IMR-90 (cell line): ENCODE measurements at regions of chr4 and their contacts with region 1.

Region 1: GRCh38 chr4:139030614-139031235 is 15.1 kb downstream of the NOCT start:
- DNase-seq: peak; percentile 83
- ATAC-seq: peak; percentile 51
- H3K4me3 ChIP-seq: no peak overlapping the region
- H3K27ac ChIP-seq: no peak overlapping the region
- H3K4me1 ChIP-seq: peaks cover 9% of the 10 kb centered on the region
- H3K27me3 ChIP-seq: no peaks in the 10 kb centered on the region
- CTCF ChIP-seq: peak; percentile 89
- POLR2A ChIP-seq: 0 out of 2 replicates have a peak, but pooled peaks have one; percentile 33
- RAD21 ChIP-seq: peak; percentile 85

Region 2: DNA sequence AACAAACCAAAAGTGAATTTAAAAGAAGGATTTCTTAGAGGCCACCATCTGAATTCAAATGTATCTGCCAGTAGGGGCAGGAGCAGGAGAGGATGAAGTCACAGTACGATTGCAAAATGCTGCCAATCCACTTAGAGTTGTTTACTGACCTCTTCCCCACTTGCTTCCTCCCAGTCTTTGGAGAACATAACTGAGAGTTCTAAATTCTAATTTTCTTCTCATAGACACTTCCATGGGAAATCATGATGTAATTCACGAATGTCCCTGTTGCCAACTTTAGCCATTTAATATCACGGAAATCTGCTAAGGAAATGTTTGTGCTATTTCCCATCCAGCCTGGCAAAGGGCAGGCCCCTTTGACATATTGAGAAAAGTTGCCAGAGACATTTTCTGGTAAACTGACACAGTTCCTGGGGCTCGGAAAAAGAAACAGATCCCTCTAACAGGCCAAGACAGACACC is 48.8 kb before region 1 on chr4:
- CTCF ChIA-PET with region 1: no interaction called
- POLR2A ChIA-PET with region 1: no interaction called
- dilution Hi-C with region 1: no loop called
- in situ Hi-C with region 1: no loop called
- intact Hi-C with region 1: no loop called
- DNase-seq: peak; percentile 74
- ATAC-seq: peak; percentile 88
- H3K4me3 ChIP-seq: no peak overlapping the region
- H3K27ac ChIP-seq: peak overlapping the region; percentile 16; the same call in 1 of the 2 replicates
- H3K4me1 ChIP-seq: peaks cover 3% of the 10 kb centered on the region
- H3K27me3 ChIP-seq: no peaks in the 10 kb centered on the region
- CTCF ChIP-seq: peak; percentile 31; the same call in 1 of the 2 replicates
- POLR2A ChIP-seq: no peak
- RAD21 ChIP-seq: no peak

Region 3: GRCh38 chr4:139018971-139019758 is 11.6 kb before region 1 on chr4:
- CTCF ChIA-PET with region 1: interaction called, 17 read pairs
- POLR2A ChIA-PET with region 1: interaction called, 3 read pairs
- dilution Hi-C with region 1: no loop called
- in situ Hi-C with region 1: no loop called
- intact Hi-C with region 1: no loop called
- DNase-seq: peak; percentile 85
- ATAC-seq: no peak
- H3K4me3 ChIP-seq: no peak overlapping the region
- H3K27ac ChIP-seq: no peak overlapping the region
- H3K4me1 ChIP-seq: peaks cover 21% of the 10 kb centered on the region
- H3K27me3 ChIP-seq: no peaks in the 10 kb centered on the region
- CTCF ChIP-seq: no peak
- POLR2A ChIP-seq: no peak
- RAD21 ChIP-seq: no peak

Region 4: DNA sequence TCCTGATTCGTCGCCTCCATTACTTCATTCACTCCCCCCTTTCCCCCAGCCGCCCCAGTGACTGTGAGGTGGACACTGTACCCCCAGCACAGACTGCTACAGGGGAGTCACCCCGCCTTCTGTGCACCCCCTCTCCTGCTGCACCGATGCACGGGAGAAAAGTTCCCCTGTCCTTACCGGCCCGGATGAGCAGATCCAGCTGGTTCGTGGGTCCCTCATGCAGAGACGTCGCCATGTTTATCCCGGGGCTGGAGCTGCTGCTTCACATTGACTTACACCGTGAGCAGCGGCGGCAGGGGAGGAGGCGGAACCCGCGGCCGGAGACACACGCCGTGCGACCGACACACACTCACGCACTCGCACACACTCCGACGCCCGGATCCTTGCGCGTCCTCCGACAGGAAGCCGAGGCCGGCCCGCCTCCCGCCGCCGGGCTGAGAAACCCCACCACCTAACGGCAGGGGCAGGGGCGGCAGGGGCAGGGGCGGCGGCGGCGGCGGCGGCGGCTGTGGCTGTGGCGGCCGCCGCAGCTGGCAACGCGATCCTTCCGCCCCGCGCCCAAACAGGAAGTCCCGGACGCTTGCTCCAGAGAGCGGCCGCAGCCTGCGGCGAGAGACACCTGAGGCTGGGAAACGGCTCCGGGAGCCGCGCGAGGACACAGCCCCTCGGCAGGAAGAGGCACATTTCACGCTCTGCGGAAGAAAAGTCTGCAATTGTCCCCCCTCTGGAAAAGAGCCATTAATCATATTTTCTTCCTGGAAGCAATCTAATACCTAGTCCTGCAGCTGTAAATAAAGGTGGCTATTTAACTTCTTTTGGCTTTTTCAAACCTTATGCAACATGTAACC is 53.5 kb after region 1 on chr4:
- CTCF ChIA-PET with region 1: interaction called, 4 read pairs
- POLR2A ChIA-PET with region 1: no interaction called
- dilution Hi-C with region 1: no loop called
- in situ Hi-C with region 1: no loop called
- intact Hi-C with region 1: loop called (anchors 2 kb)
- DNase-seq: peak; percentile 90
- ATAC-seq: peak; percentile 72
- H3K4me3 ChIP-seq: peak overlapping the region; percentile 99
- H3K27ac ChIP-seq: peak overlapping the region; percentile 94
- H3K4me1 ChIP-seq: no peaks in the 10 kb centered on the region
- H3K27me3 ChIP-seq: no peaks in the 10 kb centered on the region
- CTCF ChIP-seq: peak; percentile 10; the same call in 1 of the 2 replicates
- POLR2A ChIP-seq: 0 out of 2 replicates have a peak, but pooled peaks have one; percentile 10
- RAD21 ChIP-seq: no peak

Region 5: DNA sequence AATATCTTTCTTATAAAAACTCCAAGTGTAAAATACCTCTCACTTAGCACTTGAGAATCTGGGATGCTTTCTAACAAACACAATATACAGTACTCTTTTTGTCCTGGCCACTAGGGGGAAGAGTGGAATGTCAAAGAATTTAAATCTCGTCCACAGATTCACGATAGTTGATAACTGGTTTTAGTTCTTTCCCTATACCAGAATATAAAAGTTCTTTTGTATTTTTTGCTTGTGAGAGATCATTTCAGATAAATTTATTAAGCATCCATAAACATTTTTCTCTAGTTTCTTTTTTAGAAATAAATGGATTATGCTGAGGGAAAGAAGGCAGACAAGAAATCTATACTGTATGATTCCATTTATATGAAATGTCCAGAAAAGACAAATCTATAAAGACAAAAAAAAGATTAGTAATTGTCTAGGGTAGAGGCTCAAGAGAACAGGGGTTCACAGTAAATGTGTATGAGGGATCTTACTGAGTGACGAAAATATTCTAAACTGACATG is 198.9 kb after region 1 on chr4:
- CTCF ChIA-PET with region 1: no interaction called
- POLR2A ChIA-PET with region 1: interaction called, 13 read pairs
- dilution Hi-C with region 1: no loop called
- in situ Hi-C with region 1: no loop called
- intact Hi-C with region 1: no loop called
- DNase-seq: peak; percentile 68
- ATAC-seq: peak; percentile 89
- H3K4me3 ChIP-seq: no peak overlapping the region
- H3K27ac ChIP-seq: no peak overlapping the region
- H3K4me1 ChIP-seq: no peaks in the 10 kb centered on the region
- H3K27me3 ChIP-seq: no peaks in the 10 kb centered on the region
- CTCF ChIP-seq: peak; percentile 76
- POLR2A ChIP-seq: no peak
- RAD21 ChIP-seq: peak; percentile 69